BJ (cell line): ENCODE measurements at regions of chr22 and their contacts with region 1.

Region 1: DNA sequence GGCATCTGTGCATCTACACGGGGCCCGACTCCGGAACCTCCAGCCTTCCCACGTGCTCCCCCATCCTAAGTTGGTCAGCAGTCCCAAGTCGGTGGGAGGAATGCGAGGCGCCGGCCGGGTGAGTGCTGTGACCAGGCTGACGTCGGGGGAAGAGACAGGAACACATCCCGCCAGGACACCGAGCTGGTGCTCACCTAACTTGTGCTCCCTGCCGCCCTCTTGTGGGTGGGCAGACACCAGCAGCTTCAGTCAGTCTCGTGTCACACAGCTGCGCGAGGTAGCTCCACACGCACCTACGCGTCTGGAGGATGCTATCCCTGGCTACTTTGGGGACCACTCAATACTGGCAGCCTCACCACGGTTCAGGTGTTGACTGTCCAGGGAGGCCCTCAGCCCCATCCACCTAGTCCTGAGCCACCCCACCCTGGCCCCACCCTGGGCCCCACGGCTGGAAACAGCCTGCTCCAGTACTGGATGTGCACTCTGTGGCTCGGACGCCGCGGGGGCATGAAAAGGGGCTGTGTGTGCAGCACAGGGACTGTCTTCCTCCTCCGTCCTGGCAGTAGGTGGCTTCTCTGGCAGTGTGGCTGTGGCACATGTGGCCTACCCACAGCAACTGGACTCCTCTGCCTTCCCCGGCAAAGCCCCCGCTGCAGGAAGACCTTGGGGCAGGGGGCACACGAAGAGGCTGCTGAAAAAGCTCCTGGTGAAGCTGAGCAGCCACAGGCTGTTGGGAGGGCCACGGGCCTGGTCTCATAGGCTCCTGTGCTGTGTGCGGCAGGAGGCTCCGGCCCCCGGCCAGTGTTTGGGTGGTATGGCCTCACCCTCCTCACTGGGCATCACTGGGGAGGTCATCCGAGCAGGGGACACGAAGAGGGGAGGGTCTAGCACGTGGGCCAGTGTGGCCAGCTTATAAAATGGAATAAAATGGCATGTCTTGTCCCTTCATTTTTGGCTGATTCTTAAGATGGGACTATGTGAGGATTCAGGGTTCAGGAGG is 11.2 kb upstream of the BID start:
- DNase-seq: no peak
- H3K4me3 ChIP-seq: no peak overlapping the region
- H3K27me3 ChIP-seq: no peaks in the 10 kb centered on the region
- CTCF ChIP-seq: peak; percentile 66

Region 2: GRCh38 chr22:17460895-17461294 is 324.6 kb before region 1 on chr22:
- CTCF ChIA-PET with region 1: no interaction called
- POLR2A ChIA-PET with region 1: no interaction called
- DNase-seq: no peak
- H3K4me3 ChIP-seq: no peak overlapping the region
- H3K27me3 ChIP-seq: no peaks in the 10 kb centered on the region
- CTCF ChIP-seq: no peak

Region 3: DNA sequence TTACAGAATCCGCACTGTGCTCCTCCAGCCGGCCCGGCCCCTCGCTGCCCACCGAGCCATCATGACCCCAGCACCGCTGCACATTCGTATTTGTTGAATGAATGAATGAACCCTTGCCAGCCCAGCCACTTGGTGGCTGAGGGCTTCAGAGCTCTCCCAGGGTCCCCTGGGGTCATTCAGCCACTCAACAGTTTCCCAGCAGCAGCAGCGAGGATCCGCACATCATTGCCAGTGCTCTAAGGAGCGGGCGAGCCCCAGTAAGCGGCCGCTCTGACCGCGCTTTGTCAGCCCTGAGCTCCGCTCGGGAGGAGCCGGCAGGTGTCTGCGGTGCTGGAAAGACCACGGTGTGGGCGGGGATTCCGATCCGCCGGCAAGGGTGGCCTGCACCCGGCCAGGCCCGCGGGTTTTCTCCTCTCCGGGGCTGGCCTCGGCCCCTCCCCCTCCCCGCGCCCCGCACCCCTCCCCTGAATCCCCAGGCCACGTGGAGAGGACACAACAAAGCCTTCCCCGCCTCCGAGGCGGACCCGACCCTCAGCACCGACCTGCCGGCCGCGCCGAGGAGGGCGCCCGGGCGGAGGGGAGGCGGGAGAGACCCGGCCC is 11.8 kb before region 1 on chr22:
- CTCF ChIA-PET with region 1: interaction called, 23 read pairs
- POLR2A ChIA-PET with region 1: no interaction called
- DNase-seq: no peak
- H3K4me3 ChIP-seq: peak overlapping the region; percentile 72
- H3K27me3 ChIP-seq: no peaks in the 10 kb centered on the region
- CTCF ChIP-seq: no peak